MCF 10A (cell line): ENCODE measurements at regions of chr6 and their contacts with region 1.

Region 1: GRCh38 chr6:128569737-128570679 is 49.6 kb upstream of the PTPRK start:
- DNase-seq: peak; percentile 93
- H3K4me3 Mint-ChIP-seq: peak overlapping the region; percentile 43
- H3K27ac Mint-ChIP-seq: peak overlapping the region; percentile 66
- H3K4me1 Mint-ChIP-seq: peaks cover 34% of the 10 kb centered on the region
- H3K27me3 Mint-ChIP-seq: no peaks in the 10 kb centered on the region
- CTCF ChIP-seq: no peak

Region 2: DNA sequence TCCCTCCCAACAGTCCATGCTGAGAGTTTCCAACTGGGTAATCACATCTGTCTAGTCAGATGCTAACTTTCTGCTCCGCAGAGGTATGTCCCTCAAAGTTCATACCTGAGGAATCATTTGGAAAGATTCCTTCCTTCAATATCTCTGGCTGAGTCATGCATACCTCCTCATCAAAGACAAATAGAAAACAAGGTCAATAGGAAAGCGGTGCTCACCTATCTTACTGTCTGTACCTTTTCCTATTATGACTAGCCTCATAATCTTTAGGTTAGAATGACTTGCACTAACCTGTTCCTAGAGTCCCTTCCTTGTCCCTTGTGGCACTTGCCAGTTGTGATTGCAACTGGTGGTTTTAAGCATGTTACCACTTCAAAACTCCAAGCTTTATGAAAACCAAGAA is 28.6 kb after region 1 on chr6:
- CTCF ChIA-PET with region 1: no interaction called
- POLR2A ChIA-PET with region 1: interaction called, 14 read pairs
- intact Hi-C with region 1: no loop called
- DNase-seq: peak; percentile 23
- H3K4me3 Mint-ChIP-seq: no peak overlapping the region
- H3K27ac Mint-ChIP-seq: peak overlapping the region; percentile 30
- H3K4me1 Mint-ChIP-seq: peaks cover 52% of the 10 kb centered on the region
- H3K27me3 Mint-ChIP-seq: no peaks in the 10 kb centered on the region
- CTCF ChIP-seq: no peak